Psoas muscle (tissue), 8 donors: ENCODE measurements at regions of chr10 and their contacts with region 1.

Region 1: GRCh38 chr10:119207367-119207668 is at the start of gene GRK5:
- DNase-seq: peak; percentile 96
- ATAC-seq: peak; percentile 95 to 97 (median 96)
- H3K4me3 ChIP-seq: peak within 1 kb of the TSS; percentile 87
- H3K27ac ChIP-seq: peak within 1 kb of the TSS; percentile 94
- H3K4me1 ChIP-seq: no peaks in the 10 kb centered on the region
- H3K27me3 ChIP-seq: no peaks in the 10 kb centered on the region
- CTCF ChIP-seq: no peak
- total RNA-seq, gene GRK5: 8.0 to 15.5 (median 10.1) TPM

Region 2: DNA sequence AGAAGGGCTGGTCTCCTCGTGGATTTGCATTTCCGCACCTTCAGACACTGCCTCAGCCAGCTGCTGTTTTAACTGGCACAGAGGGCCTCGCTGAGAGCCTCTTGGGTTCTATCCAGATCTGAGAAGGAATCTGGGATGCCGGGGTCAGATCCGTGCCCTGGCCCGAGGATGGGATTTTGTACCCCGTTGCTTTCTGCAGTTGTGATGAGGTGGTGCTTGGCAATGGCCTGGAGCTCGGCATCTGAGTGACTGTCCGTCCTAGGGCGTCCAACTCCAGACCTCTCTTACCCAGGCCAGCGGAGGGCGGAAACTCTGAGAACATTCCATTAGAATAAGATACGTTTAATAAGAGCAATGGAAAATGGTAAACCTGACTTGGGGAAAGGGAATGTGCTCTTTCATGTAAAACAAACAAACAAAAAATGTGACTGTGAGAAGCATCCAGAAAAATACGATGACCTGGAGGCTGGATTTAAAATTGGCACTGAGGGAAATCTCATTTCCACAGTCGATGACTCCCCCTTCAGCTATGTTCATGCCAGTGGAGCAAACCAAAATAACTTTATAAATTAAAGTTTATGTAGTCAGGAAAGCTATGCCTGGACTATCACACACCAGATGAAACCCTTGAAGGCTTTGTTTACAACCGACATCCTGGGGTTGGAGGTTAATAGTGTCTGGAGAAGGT is 39.7 kb after region 1 on chr10:
- intact Hi-C with region 1: loop called in 1 of 2 experiments (anchors 5 kb)
- DNase-seq: peak; percentile 57 to 73
- ATAC-seq: peak; percentile 25 to 72 (median 55)
- H3K4me3 ChIP-seq: no peak overlapping the region
- H3K27ac ChIP-seq: peak overlapping the region; percentile 56
- H3K4me1 ChIP-seq: peaks cover 20% of the 10 kb centered on the region
- H3K27me3 ChIP-seq: no peaks in the 10 kb centered on the region
- CTCF ChIP-seq: no peak

Region 3: DNA sequence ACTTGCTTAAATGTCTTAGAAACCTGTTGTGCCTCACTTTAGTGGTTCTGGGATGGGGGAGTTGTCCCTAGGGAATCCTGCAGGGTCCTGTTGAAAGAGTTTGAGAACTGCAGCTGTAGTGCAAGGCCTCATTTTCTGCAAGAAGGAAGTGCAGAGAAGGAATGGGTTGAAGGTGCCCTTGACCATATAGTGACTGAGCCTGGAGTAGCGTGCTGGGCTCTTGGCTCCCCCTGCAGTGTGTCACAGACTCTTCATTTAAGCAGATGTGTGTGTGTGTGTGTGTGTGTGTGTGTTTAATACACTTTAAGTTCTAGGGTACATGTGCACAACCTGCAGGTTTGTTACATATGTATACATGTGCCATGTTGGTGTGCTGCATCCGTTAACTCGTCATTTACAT is 92.2 kb after region 1 on chr10:
- intact Hi-C with region 1: loop called in 1 of 2 experiments (anchors 5 kb)
- DNase-seq: no peak
- ATAC-seq: no peak
- H3K4me3 ChIP-seq: no peak overlapping the region
- H3K27ac ChIP-seq: no peak overlapping the region
- H3K4me1 ChIP-seq: peaks cover 8% of the 10 kb centered on the region
- H3K27me3 ChIP-seq: no peaks in the 10 kb centered on the region
- CTCF ChIP-seq: no peak